ENCODE measurements at regions of chr20 and their contacts with region 1.

Region 1: DNA sequence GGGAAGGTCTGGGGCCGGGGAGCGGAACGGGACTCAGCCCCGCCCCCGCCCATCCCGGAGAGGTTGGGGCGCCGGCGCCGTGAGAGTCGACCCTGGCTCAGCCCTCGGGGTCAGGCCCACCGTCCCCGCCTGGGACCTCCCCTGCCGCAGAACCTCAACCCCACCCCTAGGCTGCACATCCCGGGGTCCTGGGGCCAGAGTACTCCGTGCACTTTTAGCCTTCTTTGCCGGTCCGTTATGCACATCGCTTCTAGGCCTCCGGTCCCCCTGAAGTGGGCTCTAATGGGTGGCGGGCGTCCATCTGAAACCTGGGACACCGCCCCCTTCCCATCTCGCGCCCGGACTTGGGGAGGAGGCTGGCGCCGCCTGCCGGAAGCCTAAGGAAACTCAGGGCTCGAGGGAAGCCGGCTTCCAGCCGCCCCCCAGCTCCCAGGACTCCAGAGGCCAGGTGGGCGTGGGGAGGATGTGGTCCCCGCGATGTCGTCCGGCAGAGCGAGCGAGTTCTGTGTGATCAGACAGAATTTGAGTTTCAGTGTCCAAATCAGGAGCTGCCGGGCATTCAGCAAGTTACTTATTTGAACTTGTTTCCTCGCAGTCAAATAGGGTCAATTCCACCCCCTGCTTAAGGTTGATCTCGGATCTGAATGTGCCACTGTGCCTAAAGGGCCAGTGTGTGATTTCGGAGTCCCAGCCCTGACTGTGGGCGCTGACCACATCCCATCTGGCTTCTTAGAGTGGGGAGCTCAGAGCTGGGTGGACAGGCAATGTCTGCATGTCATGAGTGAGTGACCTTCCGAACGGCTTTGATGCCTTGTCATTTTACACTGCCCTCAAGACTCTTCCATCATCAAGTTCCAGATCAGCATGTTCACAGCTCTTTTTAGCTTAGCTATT is 47.6 kb downstream of the CPXM1 start:
- DNase-seq: peak; percentile 44 to 72 (median 72)
- ATAC-seq: no peak
- H3K4me3 ChIP-seq: peak overlapping the region; percentile 22
- H3K27ac ChIP-seq: no peak overlapping the region
- H3K4me1 ChIP-seq: no peaks in the 10 kb centered on the region
- H3K27me3 ChIP-seq: no peaks in the 10 kb centered on the region

Region 2: DNA sequence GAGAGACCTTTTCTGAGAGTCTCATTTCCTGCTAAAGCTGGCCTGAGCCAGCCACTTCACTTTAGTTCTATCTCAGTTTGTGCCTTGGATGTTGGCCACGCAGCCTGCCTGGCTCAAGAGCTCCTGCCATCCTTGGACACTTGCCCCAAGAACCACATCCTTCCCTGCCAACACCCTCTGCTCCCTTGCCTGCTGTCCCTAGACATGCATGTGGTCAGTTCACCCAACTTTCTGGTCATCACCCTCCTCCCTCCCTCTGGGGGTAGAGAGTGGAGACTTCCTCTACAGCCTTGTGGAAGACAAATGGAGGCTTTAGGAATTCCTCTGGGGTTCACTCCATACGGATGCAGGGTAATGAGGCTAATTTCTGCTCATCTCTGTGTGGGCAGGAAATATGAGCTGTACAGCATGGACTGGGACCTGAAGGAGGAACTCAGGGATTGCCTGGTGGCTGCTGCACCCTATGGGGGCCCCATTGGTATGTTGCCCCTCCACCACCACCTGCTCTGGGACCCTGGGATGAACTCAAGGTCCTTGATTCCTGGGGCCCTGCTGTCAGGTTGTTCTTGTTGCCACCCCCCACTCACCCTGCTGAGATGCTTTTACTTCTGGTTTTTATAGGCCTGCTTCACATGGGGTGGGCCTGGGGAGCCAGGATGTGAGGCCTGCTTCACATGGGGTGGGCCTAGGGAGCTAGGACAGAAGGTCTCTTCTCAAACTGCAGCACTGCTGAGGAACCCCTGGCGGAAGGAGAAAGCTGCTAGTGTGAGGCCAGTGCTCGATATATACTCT is 106.7 kb after region 1 on chr20:
- intact Hi-C with region 1: loop called in 1 of 4 experiments (anchors 10 kb)
- DNase-seq: peak in 1 of 3 donors; percentile 67
- ATAC-seq: peak in 1 of 2 donors; percentile 28
- H3K4me3 ChIP-seq: no peak overlapping the region
- H3K27ac ChIP-seq: no peak overlapping the region
- H3K4me1 ChIP-seq: peaks cover 2% of the 10 kb centered on the region
- H3K27me3 ChIP-seq: no peaks in the 10 kb centered on the region